ENCODE measurements at regions of chr2 and their contacts with region 1.

Region 1: GRCh38 chr2:27191053-27191829 is 20.6 kb upstream of the ATRAID start:
- DNase-seq: peak; percentile 70
- CTCF ChIP-seq: peak; percentile 68

Region 2: DNA sequence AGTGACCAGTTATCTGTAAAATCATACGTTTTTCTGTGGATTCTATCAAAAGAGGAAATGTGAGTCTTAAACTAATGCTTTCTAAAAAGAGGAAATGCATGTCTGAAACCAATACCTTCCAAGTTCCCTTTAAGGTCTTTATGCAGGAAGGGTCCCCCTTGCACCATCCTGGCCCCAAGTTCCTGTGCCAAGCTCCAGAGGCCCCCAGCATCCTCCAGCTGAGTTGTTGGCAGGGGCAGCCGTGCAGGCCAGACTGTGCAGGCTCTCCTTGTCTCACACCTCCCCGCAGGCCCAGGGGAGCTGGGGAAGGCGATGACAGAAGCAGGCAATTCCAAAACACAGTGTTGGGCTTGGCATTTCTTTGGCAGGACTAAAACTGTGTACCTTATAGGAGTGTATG is 304.1 kb before region 1 on chr2:
- CTCF ChIA-PET with region 1: no interaction called
- POLR2A ChIA-PET with region 1: no interaction called
- DNase-seq: peak; percentile 39
- CTCF ChIP-seq: no peak

Region 3: GRCh38 chr2:26964446-26965130 is 226.7 kb before region 1 on chr2:
- CTCF ChIA-PET with region 1: interaction called, 18 read pairs
- POLR2A ChIA-PET with region 1: no interaction called
- DNase-seq: no peak
- CTCF ChIP-seq: no peak

Region 4: DNA sequence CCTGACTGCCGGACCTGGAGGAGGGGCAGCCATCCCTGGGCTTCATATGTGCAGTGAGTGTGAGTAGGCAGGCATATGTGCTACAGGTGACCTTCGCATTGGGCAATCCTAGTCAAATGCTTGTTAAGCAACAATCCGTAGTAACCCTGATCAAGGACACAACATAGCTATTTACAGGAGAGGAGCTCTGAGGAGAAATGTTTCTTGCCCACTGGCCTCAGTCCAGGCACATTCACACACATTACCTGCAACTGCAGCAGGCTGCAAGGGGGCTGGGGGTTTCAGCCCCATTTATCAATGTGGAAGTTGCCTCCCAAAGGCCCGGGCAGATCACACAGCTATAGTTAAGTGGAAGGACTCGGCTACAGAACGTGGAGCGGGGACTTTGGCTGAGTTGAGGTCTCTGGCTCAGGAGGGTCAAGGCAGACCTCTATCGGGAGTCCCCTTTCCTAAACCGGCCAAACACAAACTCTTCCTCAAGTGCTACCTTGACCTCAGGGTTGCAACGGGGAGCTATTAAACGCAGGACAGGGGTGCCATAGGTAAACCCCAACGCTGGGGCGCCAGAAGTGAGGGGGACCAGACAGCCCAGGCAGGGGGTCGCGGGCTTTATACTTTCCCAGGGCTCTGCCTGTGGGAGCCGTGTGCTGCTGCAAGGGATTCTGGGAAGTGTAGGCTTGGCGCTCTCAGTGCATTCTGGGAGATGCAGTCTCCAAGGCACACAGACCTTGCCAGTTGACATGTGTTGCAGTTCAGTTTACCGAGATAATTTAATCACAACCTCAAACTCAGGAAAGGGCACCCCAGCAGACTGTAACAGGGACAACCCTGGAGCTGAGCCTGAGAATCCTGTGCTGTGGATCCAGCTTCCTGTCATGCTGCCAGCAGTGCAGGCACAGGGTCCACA is 95.2 kb before region 1 on chr2:
- CTCF ChIA-PET with region 1: interaction called, 33 read pairs
- POLR2A ChIA-PET with region 1: no interaction called
- DNase-seq: peak; percentile 85
- CTCF ChIP-seq: no peak

Region 5: DNA sequence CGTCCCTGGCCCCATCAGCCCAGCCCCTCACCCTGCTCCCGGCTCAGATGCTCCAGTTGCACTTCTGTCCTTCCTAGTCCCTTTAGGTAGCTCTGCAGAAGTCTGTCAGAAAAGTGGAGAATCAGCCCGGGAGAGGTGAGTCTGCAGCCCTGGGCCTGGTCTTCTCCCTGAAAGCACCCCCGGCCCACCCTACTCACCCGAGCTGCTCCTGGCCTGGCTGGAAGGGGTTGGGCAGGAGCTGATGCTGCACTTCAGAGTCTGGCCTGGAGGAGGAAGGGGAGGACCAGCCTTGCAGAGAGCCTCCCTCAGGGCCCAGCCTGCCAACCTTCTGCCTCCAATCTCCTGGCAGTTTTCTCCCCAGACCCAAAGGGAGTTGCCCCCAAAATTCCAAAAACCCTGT is 88.9 kb before region 1 on chr2:
- CTCF ChIA-PET with region 1: interaction called, 33 read pairs
- POLR2A ChIA-PET with region 1: no interaction called
- DNase-seq: no peak
- CTCF ChIP-seq: no peak

Region 6: GRCh38 chr2:27133905-27134780 is 57.1 kb before region 1 on chr2 and contains the start of gene PREB:
- CTCF ChIA-PET with region 1: interaction called, 14 read pairs
- POLR2A ChIA-PET with region 1: no interaction called
- DNase-seq: peak; percentile 100
- CTCF ChIP-seq: peak; percentile 43

Region 7: DNA sequence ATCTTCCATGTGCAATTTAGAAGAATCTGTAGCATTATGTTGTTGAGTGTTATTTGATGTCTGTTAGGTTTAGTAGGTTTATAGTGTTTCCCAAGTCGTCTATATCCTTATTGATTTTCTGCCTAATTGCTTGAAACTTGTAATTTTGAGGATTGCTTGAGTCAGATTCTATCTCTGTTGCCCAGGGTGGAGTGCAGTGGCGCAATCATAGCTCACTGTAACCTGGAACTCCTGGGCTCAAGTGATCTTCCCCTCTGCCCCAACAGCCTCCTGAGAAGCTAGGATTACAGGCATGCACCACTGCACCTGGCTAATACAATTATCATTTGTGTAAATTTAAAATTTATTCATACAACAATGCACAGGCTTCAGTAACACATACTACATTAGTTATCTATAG is 45.6 kb before region 1 on chr2:
- CTCF ChIA-PET with region 1: no interaction called
- POLR2A ChIA-PET with region 1: no interaction called
- DNase-seq: no peak
- CTCF ChIP-seq: no peak

Region 8: GRCh38 chr2:27174316-27175040 is 16.8 kb before region 1 on chr2:
- CTCF ChIA-PET with region 1: interaction called, 14 read pairs
- POLR2A ChIA-PET with region 1: no interaction called
- DNase-seq: no peak
- CTCF ChIP-seq: no peak

Measured in GM10248 (cell line).